ENCODE measurements at regions of chr7 and their contacts with region 1.

Region 1: DNA sequence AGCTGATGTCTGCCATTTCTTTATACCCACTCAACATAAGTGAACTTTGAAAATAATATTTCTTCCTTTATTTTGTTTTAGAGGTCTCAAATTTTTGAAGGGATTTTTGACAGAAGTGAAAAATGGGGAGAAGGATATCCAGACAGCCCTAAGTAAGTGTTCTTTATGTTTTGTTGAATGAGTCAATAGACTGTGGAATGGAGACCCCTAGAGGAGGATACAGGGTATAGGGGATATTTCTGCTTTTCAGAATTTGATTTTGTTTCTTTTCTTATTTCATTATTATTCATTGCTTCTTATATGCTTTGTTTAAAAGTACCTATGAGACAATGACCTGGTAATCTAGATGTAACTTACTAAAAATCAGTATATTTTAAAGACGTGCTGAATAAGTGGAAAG is 34.4 kb downstream of the PLEKHA8 start:
- DNase-seq: no peak
- ATAC-seq: peak; percentile 68
- H3K4me3 Mint-ChIP-seq: no peak overlapping the region
- H3K27ac Mint-ChIP-seq: no peak overlapping the region
- H3K4me1 Mint-ChIP-seq: peaks cover 5% of the 10 kb centered on the region
- H3K27me3 Mint-ChIP-seq: no peaks in the 10 kb centered on the region

Region 2: GRCh38 chr7:29748286-29749108 is 314.1 kb before region 1 on chr7:
- CTCF ChIA-PET with region 1: interaction called, 10 read pairs
- DNase-seq: no peak
- ATAC-seq: no peak
- H3K4me3 Mint-ChIP-seq: no peak overlapping the region
- H3K27ac Mint-ChIP-seq: no peak overlapping the region
- H3K4me1 Mint-ChIP-seq: no peaks in the 10 kb centered on the region
- H3K27me3 Mint-ChIP-seq: peaks cover 8% of the 10 kb centered on the region

Region 3: DNA sequence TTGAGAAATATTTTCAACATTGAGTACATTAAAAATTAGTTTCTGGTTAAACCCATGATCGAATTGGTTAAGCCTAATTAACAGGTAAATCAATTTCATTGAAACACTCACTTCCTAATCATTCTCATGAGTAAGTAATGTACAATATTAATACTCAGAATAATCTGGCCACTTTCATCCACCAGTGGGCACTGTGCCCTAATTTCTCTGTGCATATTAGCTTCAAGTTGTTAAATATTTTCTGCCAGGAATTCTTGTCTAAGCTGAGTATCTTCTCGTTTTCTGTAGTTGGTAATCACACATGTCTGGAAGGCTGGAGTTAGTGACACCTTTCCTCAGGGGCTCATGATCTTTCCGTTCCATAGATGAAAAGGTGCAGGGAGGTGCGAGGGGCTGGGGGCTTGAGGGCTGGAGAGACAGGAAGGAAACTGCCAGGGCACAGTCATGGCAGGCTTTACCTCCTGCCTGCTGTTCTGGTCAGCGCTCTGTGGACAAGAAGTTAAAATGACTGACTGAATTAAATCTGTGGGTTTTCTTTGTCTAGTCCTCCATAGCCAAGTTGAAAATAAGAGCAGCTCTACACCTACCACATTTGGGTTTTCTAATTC is 184.4 kb before region 1 on chr7:
- CTCF ChIA-PET with region 1: interaction called, 16 read pairs
- DNase-seq: no peak
- ATAC-seq: no peak
- H3K4me3 Mint-ChIP-seq: no peak overlapping the region
- H3K27ac Mint-ChIP-seq: no peak overlapping the region
- H3K4me1 Mint-ChIP-seq: no peaks in the 10 kb centered on the region
- H3K27me3 Mint-ChIP-seq: peaks cover 27% of the 10 kb centered on the region

Region 4: GRCh38 chr7:30028749-30029635 is 33.6 kb before region 1 on chr7:
- CTCF ChIA-PET with region 1: interaction called, 13 read pairs
- DNase-seq: peak; percentile 59
- ATAC-seq: peak; percentile 6
- H3K4me3 Mint-ChIP-seq: no peak overlapping the region
- H3K27ac Mint-ChIP-seq: peak overlapping the region; percentile 68
- H3K4me1 Mint-ChIP-seq: peaks cover 21% of the 10 kb centered on the region
- H3K27me3 Mint-ChIP-seq: no peaks in the 10 kb centered on the region

Region 5: GRCh38 chr7:30308389-30308788 is 245.8 kb after region 1 on chr7:
- CTCF ChIA-PET with region 1: no interaction called
- DNase-seq: no peak
- ATAC-seq: peak; percentile 51
- H3K4me3 Mint-ChIP-seq: no peak overlapping the region
- H3K27ac Mint-ChIP-seq: no peak overlapping the region
- H3K4me1 Mint-ChIP-seq: peaks cover 39% of the 10 kb centered on the region
- H3K27me3 Mint-ChIP-seq: no peaks in the 10 kb centered on the region